MCF 10A (cell line): ENCODE measurements at regions of chr20 and their contacts with region 1.

Region 1: GRCh38 chr20:20593447-20594170 is 118.8 kb downstream of the RALGAPA2 start:
- DNase-seq: peak; percentile 46
- H3K4me3 Mint-ChIP-seq: no peak overlapping the region
- H3K27ac Mint-ChIP-seq: peak overlapping the region; percentile 27
- H3K4me1 Mint-ChIP-seq: peaks cover 10% of the 10 kb centered on the region
- H3K27me3 Mint-ChIP-seq: no peaks in the 10 kb centered on the region
- CTCF ChIP-seq: peak; percentile 49

Region 2: GRCh38 chr20:20052074-20052970 is 541.3 kb before region 1 on chr20 and contains the starts of genes CFAP61 and CRNKL1:
- CTCF ChIA-PET with region 1: interaction called, 26 read pairs
- POLR2A ChIA-PET with region 1: interaction called, 9 read pairs
- intact Hi-C with region 1: no loop called
- DNase-seq: peak; percentile 96
- H3K4me3 Mint-ChIP-seq: peak within 1 kb of the TSS; percentile 97
- H3K27ac Mint-ChIP-seq: peak within 1 kb of the TSS; percentile 96
- H3K4me1 Mint-ChIP-seq: peaks cover 10% of the 10 kb centered on the region
- H3K27me3 Mint-ChIP-seq: no peaks in the 10 kb centered on the region
- CTCF ChIP-seq: no peak
- total RNA-seq, gene CFAP61: 1.4 and 1.5 TPM in 2 replicates
- total RNA-seq, gene CRNKL1: 19.4 and 20.1 TPM in 2 replicates

Region 3: DNA sequence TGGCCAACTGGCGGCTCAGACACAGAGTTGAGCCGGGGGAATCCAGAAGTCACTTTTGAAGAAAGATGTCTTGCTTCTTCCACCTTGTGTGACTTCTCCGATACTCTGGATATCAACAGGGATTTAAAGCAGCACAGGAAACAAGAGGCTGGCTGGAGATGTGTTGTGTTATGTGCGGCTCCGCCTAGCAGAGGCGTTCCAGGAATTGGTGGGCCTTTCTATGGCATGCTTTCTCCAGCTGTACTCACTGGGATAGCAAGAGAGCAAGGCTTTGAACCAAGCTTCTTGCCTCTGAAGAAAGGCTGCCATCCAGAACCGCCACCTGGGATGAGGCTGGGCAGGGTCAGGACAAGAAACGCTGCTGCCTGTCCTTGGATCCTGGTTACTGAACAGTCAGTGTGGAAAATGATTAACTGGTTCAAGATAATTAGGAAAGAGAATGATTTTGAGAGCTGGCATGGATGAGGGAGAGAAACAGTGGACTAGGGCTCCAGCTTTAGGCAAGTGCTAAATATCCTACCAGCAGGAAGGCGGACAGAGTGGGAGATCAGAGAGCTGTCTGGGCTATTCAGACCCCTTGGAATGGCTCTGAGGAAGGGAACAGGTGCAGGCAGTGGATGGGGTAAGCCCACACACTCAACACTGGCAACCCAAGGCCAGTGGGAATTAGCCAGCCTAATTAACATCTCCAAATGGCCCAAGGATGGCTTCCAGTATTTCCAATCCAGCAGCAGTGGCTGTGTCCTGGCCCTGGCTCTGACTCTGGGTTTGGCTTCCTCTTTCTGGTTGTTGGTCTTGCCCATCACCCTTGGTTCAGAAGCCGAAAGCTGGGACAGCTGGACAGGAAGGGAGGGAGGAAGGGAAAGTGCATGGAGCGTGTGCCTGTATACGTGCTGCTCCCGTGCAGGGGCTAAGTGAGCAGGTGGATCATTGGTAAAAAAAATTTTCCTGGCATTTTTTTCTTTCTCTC is 193.8 kb before region 1 on chr20:
- CTCF ChIA-PET with region 1: interaction called, 10 read pairs
- POLR2A ChIA-PET with region 1: no interaction called
- intact Hi-C with region 1: no loop called
- DNase-seq: no peak
- H3K4me3 Mint-ChIP-seq: no peak overlapping the region
- H3K27ac Mint-ChIP-seq: no peak overlapping the region
- H3K4me1 Mint-ChIP-seq: no peaks in the 10 kb centered on the region
- H3K27me3 Mint-ChIP-seq: no peaks in the 10 kb centered on the region
- CTCF ChIP-seq: no peak

Region 4: DNA sequence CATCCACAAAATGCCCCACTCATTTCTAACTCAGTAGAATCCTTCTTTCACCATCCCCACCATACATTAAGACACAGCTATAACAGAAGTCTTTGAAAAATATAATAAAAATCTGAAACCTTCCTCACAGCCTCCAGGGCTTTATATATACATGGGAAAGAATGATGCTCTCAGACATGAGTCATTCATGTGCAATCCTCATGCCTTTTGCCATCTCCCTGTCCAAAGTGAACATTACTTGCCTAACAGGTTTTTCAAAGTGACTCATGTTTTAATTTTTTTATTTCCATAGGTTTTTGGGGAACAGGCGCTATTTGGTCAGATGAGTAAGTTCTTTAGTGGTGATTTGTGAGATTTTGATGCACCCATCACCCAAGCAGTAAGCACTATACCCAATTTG is 43.9 kb before region 1 on chr20:
- CTCF ChIA-PET with region 1: interaction called, 14 read pairs
- POLR2A ChIA-PET with region 1: interaction called, 3 read pairs
- intact Hi-C with region 1: no loop called
- DNase-seq: peak; percentile 91
- H3K4me3 Mint-ChIP-seq: peak overlapping the region; percentile 19
- H3K27ac Mint-ChIP-seq: peak overlapping the region; percentile 74
- H3K4me1 Mint-ChIP-seq: peaks cover 25% of the 10 kb centered on the region
- H3K27me3 Mint-ChIP-seq: no peaks in the 10 kb centered on the region
- CTCF ChIP-seq: no peak

Region 5: GRCh38 chr20:20573787-20574186 is 19.8 kb before region 1 on chr20:
- CTCF ChIA-PET with region 1: interaction called, 127 read pairs
- POLR2A ChIA-PET with region 1: no interaction called
- intact Hi-C with region 1: no loop called
- DNase-seq: no peak
- H3K4me3 Mint-ChIP-seq: no peak overlapping the region
- H3K27ac Mint-ChIP-seq: no peak overlapping the region
- H3K4me1 Mint-ChIP-seq: no peaks in the 10 kb centered on the region
- H3K27me3 Mint-ChIP-seq: no peaks in the 10 kb centered on the region
- CTCF ChIP-seq: no peak

Region 6: GRCh38 chr20:20621195-20621594 is 27.6 kb after region 1 on chr20:
- CTCF ChIA-PET with region 1: interaction called, 14 read pairs
- POLR2A ChIA-PET with region 1: no interaction called
- intact Hi-C with region 1: no loop called
- DNase-seq: no peak
- H3K4me3 Mint-ChIP-seq: no peak overlapping the region
- H3K27ac Mint-ChIP-seq: no peak overlapping the region
- H3K4me1 Mint-ChIP-seq: no peaks in the 10 kb centered on the region
- H3K27me3 Mint-ChIP-seq: no peaks in the 10 kb centered on the region
- CTCF ChIP-seq: no peak